ENCODE measurements at regions of chr18 and their contacts with region 1.

Region 1: DNA sequence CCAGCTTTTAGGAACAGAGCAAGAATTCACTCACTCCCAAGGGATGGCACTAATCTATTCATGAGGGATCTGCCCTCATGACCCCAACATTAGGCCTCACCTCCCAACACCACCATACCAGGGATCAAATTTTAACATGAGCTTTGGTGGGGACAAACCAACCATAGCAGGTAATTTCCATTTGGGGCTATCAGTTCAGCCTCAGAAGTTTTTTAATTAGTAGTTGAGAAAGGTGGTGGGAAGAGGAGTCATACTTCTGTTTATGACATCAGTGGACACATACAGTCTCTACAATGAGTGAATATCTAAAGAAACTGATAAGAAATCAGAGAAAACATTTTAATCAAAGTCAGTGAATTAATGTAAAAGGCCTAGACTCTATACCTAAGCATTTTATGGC is 59.6 kb upstream of the EMILIN2 start:
- DNase-seq: no peak
- ATAC-seq: no peak
- H3K4me3 ChIP-seq: no peak overlapping the region
- H3K27ac ChIP-seq: no peak overlapping the region
- H3K4me1 ChIP-seq: no peaks in the 10 kb centered on the region
- H3K27me3 ChIP-seq: no peaks in the 10 kb centered on the region
- CTCF ChIP-seq: no peak
- POLR2A ChIP-seq: no peak

Region 2: DNA sequence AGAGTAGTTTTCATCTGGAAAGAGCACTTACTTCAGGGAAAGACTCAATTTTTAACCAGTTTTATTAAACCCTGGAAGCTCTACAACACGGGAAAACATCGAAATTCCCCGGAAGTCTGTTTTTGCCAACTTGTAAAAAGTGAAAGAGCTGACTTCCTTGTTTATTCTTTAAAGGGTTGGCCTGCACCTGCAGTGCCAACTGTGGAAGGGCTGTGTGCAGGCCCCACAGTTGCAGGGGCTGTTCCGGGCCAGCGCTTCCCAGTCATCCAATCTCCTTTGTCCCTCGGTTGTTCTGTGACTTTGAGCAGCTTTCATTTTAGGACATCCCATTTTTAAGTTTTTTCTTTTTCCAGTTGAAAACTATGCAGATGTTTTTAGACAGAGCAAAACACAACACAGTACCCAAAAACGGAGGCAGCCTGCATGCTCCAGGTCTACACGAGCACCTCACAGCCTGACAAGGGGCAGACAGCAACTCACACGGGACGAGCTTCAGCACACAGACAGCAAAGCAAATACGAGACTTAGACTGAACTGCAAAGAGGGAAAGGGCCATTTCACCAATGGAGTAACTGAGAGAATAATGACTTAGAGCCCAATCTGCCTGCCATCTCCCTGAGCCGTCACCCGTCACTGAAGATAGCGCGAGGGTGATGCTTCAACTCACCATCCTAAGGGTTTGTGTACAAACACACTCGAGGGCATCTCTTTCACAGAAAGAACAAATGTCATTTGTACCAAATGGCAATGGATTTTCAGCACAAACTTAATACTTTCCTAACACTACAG is 130.2 kb after region 1 on chr18:
- intact Hi-C with region 1: loop called in 1 of 10 experiments (anchors 10 kb)
- DNase-seq: no peak
- ATAC-seq: no peak
- H3K4me3 ChIP-seq: no peak overlapping the region
- H3K27ac ChIP-seq: peak overlapping the region in 1 of 12 donors; percentile 19
- H3K4me1 ChIP-seq: peaks cover 0 to 23% (median 1%) of the 10 kb centered on the region in 12 donors
- H3K27me3 ChIP-seq: no peaks in the 10 kb centered on the region
- CTCF ChIP-seq: no peak
- POLR2A ChIP-seq: no peak